Activated CD4-positive, alpha-beta T cell treated with anti-CD3 and anti-CD28 coated beads for 36 hours (primary cell): ENCODE measurements at regions of chr9 and their contacts with region 1.

Region 1: GRCh38 chr9:35481347-35481975 is 8.4 kb upstream of the RUSC2 start:
- DNase-seq: peak; percentile 46
- ATAC-seq: peak; percentile 78
- H3K4me3 Mint-ChIP-seq: no peak overlapping the region
- H3K27ac Mint-ChIP-seq: no peak overlapping the region
- H3K4me1 Mint-ChIP-seq: no peaks in the 10 kb centered on the region
- H3K27me3 Mint-ChIP-seq: peaks cover 3% of the 10 kb centered on the region

Region 2: GRCh38 chr9:34759432-34760134 is 721.9 kb before region 1 on chr9:
- CTCF ChIA-PET with region 1: interaction called, 3 read pairs
- POLR2A ChIA-PET with region 1: no interaction called
- intact Hi-C with region 1: loop called in 1 of 2 experiments (anchors 2 kb)
- DNase-seq: no peak
- ATAC-seq: no peak
- H3K4me3 Mint-ChIP-seq: no peak overlapping the region
- H3K27ac Mint-ChIP-seq: no peak overlapping the region
- H3K4me1 Mint-ChIP-seq: peaks cover 2% of the 10 kb centered on the region
- H3K27me3 Mint-ChIP-seq: peaks cover 22% of the 10 kb centered on the region

Region 3: GRCh38 chr9:35258676-35259474 is 222.6 kb before region 1 on chr9:
- CTCF ChIA-PET with region 1: no interaction called
- POLR2A ChIA-PET with region 1: no interaction called
- intact Hi-C with region 1: loop called in 1 of 2 experiments (anchors 2 kb)
- DNase-seq: peak; percentile 68
- ATAC-seq: peak; percentile 42
- H3K4me3 Mint-ChIP-seq: no peak overlapping the region
- H3K27ac Mint-ChIP-seq: no peak overlapping the region
- H3K4me1 Mint-ChIP-seq: no peaks in the 10 kb centered on the region
- H3K27me3 Mint-ChIP-seq: peaks cover 2% of the 10 kb centered on the region

Region 4: DNA sequence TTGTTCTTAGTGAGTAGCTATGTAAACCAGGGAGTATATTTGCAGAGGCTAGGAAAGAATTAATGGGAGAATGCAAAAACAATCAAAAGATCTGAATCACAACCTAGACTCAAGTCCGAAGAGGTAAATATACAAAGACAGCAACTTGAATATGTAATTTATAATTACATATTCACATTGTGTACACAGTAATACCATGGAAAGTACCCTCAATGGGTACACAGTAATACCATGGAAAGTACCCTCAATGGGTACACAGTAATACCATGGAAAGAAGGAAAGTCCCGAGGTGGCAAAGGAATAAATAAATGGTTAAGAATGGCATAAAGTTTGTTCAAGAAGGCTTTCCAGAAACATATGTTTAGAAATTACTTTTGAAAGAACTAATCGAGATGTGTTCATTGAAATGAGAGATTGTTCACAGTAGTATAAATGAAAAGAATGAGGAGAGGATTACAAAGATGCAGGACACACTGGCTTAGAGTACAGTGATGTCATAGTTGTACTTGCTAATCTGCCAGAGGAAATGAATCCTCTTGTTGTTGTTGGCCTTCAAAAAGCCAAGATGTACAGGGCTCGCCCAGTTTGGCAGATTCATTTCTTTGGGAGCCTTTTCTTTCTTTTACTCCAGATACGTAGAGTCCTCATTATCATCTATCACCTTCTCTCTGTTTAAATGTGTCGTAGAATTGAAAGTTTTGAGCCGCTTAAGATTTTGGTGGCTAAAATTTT is 203.7 kb before region 1 on chr9:
- CTCF ChIA-PET with region 1: no interaction called
- POLR2A ChIA-PET with region 1: no interaction called
- intact Hi-C with region 1: no loop called
- DNase-seq: no peak
- ATAC-seq: peak; percentile 47
- H3K4me3 Mint-ChIP-seq: no peak overlapping the region
- H3K27ac Mint-ChIP-seq: no peak overlapping the region
- H3K4me1 Mint-ChIP-seq: peaks cover 28% of the 10 kb centered on the region
- H3K27me3 Mint-ChIP-seq: no peaks in the 10 kb centered on the region

Region 5: DNA sequence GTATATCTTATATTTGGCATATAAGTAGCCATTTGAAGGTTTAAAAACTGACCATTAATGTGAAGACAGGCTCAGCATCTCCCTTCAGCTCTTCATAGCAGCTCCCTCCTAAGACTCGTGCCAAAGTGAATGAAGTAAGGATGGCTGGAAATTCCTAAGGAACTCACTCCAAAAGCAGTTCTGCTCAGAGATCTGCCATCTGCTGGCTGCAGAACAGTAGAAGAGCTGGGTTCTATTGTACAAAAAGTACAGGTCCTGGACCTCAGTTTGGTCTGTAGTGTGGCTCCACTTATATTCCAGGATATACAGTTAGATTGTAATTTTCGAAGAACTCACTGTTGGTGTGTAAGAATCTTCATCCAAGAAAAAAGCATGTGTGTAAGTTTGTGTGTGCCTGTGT is 96.4 kb before region 1 on chr9:
- CTCF ChIA-PET with region 1: no interaction called
- POLR2A ChIA-PET with region 1: no interaction called
- intact Hi-C with region 1: no loop called
- DNase-seq: no peak
- ATAC-seq: no peak
- H3K4me3 Mint-ChIP-seq: no peak overlapping the region
- H3K27ac Mint-ChIP-seq: no peak overlapping the region
- H3K4me1 Mint-ChIP-seq: no peaks in the 10 kb centered on the region
- H3K27me3 Mint-ChIP-seq: no peaks in the 10 kb centered on the region